ENCODE measurements at regions of chr3 and their contacts with region 1.

Region 1: GRCh38 chr3:153768561-153769469 is 352.4 kb upstream of the ARHGEF26 start:
- DNase-seq: peak; percentile 56
- ATAC-seq: peak; percentile 95
- H3K4me3 Mint-ChIP-seq: no peak overlapping the region
- H3K27ac Mint-ChIP-seq: no peak overlapping the region
- H3K4me1 Mint-ChIP-seq: no peaks in the 10 kb centered on the region
- H3K27me3 Mint-ChIP-seq: peaks cover 20% of the 10 kb centered on the region
- CTCF ChIP-seq: peak; percentile 76

Region 2: DNA sequence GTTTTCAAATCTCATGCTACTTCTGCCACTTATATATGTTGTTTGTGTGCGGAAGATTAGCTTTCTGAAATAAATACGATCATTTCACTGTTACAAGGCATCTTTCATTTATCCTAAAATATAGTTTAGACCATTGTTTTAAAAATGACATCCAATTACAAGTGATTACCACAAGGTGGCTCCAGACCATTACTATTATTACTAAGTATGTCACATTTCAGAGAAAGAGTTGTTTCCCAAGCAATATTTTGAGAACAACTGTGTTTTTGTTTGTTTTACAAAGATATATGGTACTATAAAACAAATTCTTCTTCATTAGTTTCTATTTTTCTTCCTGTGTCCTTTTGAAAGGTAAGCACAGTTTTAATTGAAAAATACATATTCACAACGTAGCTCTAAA is 742.8 kb before region 1 on chr3:
- CTCF ChIA-PET with region 1: interaction called, 7 read pairs
- POLR2A ChIA-PET with region 1: no interaction called
- intact Hi-C with region 1: loop called (anchors 5 kb)
- DNase-seq: no peak
- ATAC-seq: no peak
- H3K4me3 Mint-ChIP-seq: no peak overlapping the region
- H3K27ac Mint-ChIP-seq: no peak overlapping the region
- H3K4me1 Mint-ChIP-seq: no peaks in the 10 kb centered on the region
- H3K27me3 Mint-ChIP-seq: peaks cover 11% of the 10 kb centered on the region
- CTCF ChIP-seq: peak; percentile 61

Region 3: GRCh38 chr3:153043729-153044328 is 725.0 kb before region 1 on chr3:
- CTCF ChIA-PET with region 1: interaction called, 14 read pairs
- POLR2A ChIA-PET with region 1: no interaction called
- intact Hi-C with region 1: loop called (anchors 5 kb)
- DNase-seq: no peak
- ATAC-seq: no peak
- H3K4me3 Mint-ChIP-seq: no peak overlapping the region
- H3K27ac Mint-ChIP-seq: no peak overlapping the region
- H3K4me1 Mint-ChIP-seq: peaks cover 5% of the 10 kb centered on the region
- H3K27me3 Mint-ChIP-seq: peaks cover 2% of the 10 kb centered on the region
- CTCF ChIP-seq: no peak

Region 4: GRCh38 chr3:153439777-153440176 is 329.0 kb before region 1 on chr3:
- CTCF ChIA-PET with region 1: interaction called, 3 read pairs
- POLR2A ChIA-PET with region 1: no interaction called
- intact Hi-C with region 1: loop called (anchors 10 kb)
- DNase-seq: no peak
- ATAC-seq: no peak
- H3K4me3 Mint-ChIP-seq: no peak overlapping the region
- H3K27ac Mint-ChIP-seq: no peak overlapping the region
- H3K4me1 Mint-ChIP-seq: peaks cover 14% of the 10 kb centered on the region
- H3K27me3 Mint-ChIP-seq: no peaks in the 10 kb centered on the region
- CTCF ChIP-seq: no peak

Region 5: GRCh38 chr3:153756816-153757215 is 12.0 kb before region 1 on chr3:
- CTCF ChIA-PET with region 1: interaction called, 14 read pairs
- POLR2A ChIA-PET with region 1: no interaction called
- intact Hi-C with region 1: no loop called
- DNase-seq: no peak
- ATAC-seq: no peak
- H3K4me3 Mint-ChIP-seq: no peak overlapping the region
- H3K27ac Mint-ChIP-seq: no peak overlapping the region
- H3K4me1 Mint-ChIP-seq: no peaks in the 10 kb centered on the region
- H3K27me3 Mint-ChIP-seq: no peaks in the 10 kb centered on the region
- CTCF ChIP-seq: no peak

Region 6: GRCh38 chr3:154334973-154335420 is 566.2 kb after region 1 on chr3:
- CTCF ChIA-PET with region 1: no interaction called
- POLR2A ChIA-PET with region 1: no interaction called
- intact Hi-C with region 1: no loop called
- DNase-seq: no peak
- ATAC-seq: peak; percentile 56
- H3K4me3 Mint-ChIP-seq: no peak overlapping the region
- H3K27ac Mint-ChIP-seq: no peak overlapping the region
- H3K4me1 Mint-ChIP-seq: no peaks in the 10 kb centered on the region
- H3K27me3 Mint-ChIP-seq: peaks cover 7% of the 10 kb centered on the region
- CTCF ChIP-seq: peak; percentile 62